Breast epithelium (tissue), 4 donors: ENCODE measurements at regions of chrX and their contacts with region 1.

Region 1: GRCh38 chrX:95675794-95676193 is 1008.8 kb upstream of the DIAPH2 start:
- DNase-seq: no peak
- H3K4me3 ChIP-seq: no peak overlapping the region
- H3K27ac ChIP-seq: no peak overlapping the region
- H3K4me1 ChIP-seq: no peaks in the 10 kb centered on the region
- H3K27me3 ChIP-seq: peaks cover 0 to 18% of the 10 kb centered on the region in 2 donors
- CTCF ChIP-seq: no peak
- POLR2A ChIP-seq: no peak

Region 2: DNA sequence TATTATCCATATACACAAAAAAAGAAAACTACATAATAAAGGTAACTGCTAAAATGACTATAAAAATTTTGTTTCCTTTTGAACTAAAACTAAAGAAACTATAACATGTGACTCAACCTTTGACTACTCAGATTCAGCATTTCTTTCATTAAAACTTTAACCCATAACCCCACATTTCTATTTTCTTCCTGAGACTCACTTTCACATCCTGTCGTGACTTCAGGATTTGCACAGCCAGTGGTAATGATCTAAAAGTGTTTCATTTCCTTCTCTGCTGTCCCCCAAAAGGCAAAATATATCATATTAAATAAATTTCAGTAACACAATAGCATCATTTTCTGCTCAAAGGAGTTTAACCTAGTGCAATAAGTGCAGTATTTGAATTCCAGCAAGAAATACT is 13.6 kb before region 1 on chrX:
- intact Hi-C with region 1: loop called (anchors 1 kb)
- DNase-seq: no peak
- H3K4me3 ChIP-seq: no peak overlapping the region
- H3K27ac ChIP-seq: no peak overlapping the region
- H3K4me1 ChIP-seq: no peaks in the 10 kb centered on the region
- H3K27me3 ChIP-seq: peaks cover 0 to 20% of the 10 kb centered on the region in 2 donors
- CTCF ChIP-seq: no peak
- POLR2A ChIP-seq: no peak

Region 3: GRCh38 chrX:95762716-95763115 is 86.9 kb after region 1 on chrX:
- intact Hi-C with region 1: no loop called
- DNase-seq: no peak
- H3K4me3 ChIP-seq: no peak overlapping the region
- H3K27ac ChIP-seq: no peak overlapping the region
- H3K4me1 ChIP-seq: no peaks in the 10 kb centered on the region
- H3K27me3 ChIP-seq: peaks cover 0 to 20% of the 10 kb centered on the region in 2 donors
- CTCF ChIP-seq: no peak
- POLR2A ChIP-seq: no peak